Sigmoid colon (tissue), 7 donors: ENCODE measurements at regions of chr6 and their contacts with region 1.

Region 1: GRCh38 chr6:32589598-32590449 is at the start of gene HLA-DRB1:
- DNase-seq: no peak
- H3K4me3 ChIP-seq: peak within 1 kb of the TSS in 1 of 4 donors; percentile 31
- H3K27ac ChIP-seq: peak within 1 kb of the TSS in 1 of 4 donors; percentile 39
- H3K4me1 ChIP-seq: no peaks in the 10 kb centered on the region
- H3K27me3 ChIP-seq: no peaks in the 10 kb centered on the region
- CTCF ChIP-seq: no peak
- EP300 ChIP-seq: no peak
- POLR2A ChIP-seq: no peak
- total RNA-seq, gene HLA-DRB1: 23.5 to 44.6 (median 27.7) TPM

Region 2: DNA sequence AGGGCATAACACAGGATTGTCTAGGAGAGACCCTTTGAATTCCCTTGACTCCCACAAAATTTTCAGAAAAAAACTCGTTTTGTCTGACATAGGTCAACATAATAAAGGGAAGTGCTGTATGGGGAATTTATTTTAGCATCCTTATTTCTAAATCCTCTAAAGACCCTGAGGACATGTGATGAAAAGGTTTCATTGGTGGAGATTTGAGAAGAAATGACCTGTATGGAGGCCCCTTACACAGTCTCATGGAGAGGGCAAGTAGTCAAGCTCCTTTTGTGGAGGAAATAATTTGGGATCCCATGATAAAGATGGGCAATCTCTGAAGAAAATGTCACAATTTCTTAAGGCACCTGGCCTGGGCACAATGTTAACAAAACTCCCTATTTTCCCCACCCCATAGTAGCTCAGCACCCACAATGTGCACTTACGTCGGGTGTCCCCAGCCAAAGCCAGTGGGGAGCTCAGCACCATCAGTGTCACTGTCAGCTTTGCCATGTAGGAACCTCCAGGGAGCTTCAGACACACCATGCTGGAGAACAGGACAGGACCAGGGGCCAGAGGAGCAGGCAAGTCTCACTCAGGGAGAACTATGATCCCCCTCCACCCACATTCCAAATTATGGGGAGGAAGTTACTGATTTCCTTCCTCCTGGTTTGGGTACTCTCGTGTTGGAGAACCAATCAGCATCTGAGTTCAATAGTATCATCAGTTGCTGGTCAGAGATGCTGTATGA is 60.0 kb before region 1 on chr6 and contains the start of gene HLA-DRB5:
- intact Hi-C with region 1: loop called (anchors 10 kb)
- DNase-seq: peak; percentile 56
- H3K4me3 ChIP-seq: peak within 1 kb of the TSS in 1 of 4 donors; percentile 24
- H3K27ac ChIP-seq: peak within 1 kb of the TSS in 1 of 4 donors; percentile 28
- H3K4me1 ChIP-seq: no peaks in the 10 kb centered on the region
- H3K27me3 ChIP-seq: no peaks in the 10 kb centered on the region
- CTCF ChIP-seq: no peak
- EP300 ChIP-seq: no peak
- POLR2A ChIP-seq: no peak
- total RNA-seq, gene HLA-DRB5: 0.71 to 20.8 (median 1.6) TPM